Colonic mucosa (tissue), 4 donors: ENCODE measurements at regions of chr21 and their contacts with region 1.

Region 1: GRCh38 chr21:36330904-36331303 is 10.9 kb downstream of the MORC3 start:
- DNase-seq: peak; percentile 52
- H3K4me3 ChIP-seq: no peak overlapping the region
- H3K27ac ChIP-seq: no peak overlapping the region
- H3K4me1 ChIP-seq: peaks cover 3% of the 10 kb centered on the region
- H3K27me3 ChIP-seq: no peaks in the 10 kb centered on the region
- CTCF ChIP-seq: peak; percentile 55

Region 2: DNA sequence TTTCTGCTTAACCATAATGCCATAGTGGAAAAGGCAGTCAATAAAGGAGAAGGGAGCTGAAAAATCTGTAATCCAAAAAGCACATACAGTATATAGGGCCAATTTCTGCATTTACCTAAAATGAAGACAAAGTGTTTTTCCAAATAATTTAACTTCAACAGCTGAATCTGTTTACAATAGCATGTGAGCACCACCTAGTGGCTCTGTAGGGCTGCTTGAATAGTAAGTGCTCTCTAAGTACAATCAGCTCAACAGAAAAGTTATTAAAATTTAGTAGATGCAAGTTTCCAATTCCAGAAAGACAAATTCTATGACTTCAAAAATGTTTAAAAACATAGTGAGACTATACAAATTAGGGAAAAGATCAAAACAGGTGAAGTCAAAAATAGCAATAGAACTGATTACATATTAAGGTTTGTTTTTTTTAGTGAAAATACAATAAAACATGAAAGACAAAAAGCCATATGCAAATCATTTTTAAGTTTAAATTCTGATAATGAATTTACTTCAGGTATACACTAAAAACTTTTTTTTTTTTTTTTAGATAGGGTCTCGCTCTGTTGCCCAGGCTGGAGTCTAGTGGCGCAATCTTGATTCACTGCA is 490.6 kb before region 1 on chr21:
- intact Hi-C with region 1: no loop called
- DNase-seq: peak; percentile 65
- H3K4me3 ChIP-seq: no peak overlapping the region
- H3K27ac ChIP-seq: no peak overlapping the region
- H3K4me1 ChIP-seq: no peaks in the 10 kb centered on the region
- H3K27me3 ChIP-seq: no peaks in the 10 kb centered on the region
- CTCF ChIP-seq: peak; percentile 69

Region 3: GRCh38 chr21:36149788-36150711 is 180.9 kb before region 1 on chr21:
- intact Hi-C with region 1: loop called (anchors 5 kb)
- DNase-seq: no peak
- H3K4me3 ChIP-seq: no peak overlapping the region
- H3K27ac ChIP-seq: peak overlapping the region; percentile 31
- H3K4me1 ChIP-seq: peaks cover 7% of the 10 kb centered on the region
- H3K27me3 ChIP-seq: no peaks in the 10 kb centered on the region
- CTCF ChIP-seq: no peak

Region 4: DNA sequence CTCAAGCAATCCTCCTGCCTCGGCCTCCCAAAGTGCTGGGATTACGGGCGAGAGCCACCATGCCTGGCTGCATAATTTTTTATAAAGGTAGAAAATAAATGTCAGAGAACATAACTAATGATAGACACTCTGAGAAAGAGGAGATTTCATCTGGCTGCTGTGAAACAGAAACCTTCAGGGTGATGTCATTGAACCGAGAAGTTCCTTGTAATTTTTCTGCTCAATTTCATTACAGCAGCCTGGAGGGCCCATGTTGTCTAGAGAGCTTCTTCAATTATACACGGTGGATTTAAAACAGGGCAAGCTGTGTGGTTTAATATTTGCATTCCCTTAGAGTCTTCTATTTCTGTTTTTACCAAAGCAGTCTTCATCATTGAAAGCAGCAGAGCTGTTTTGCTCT is 75.2 kb before region 1 on chr21:
- intact Hi-C with region 1: no loop called
- DNase-seq: no peak
- H3K4me3 ChIP-seq: no peak overlapping the region
- H3K27ac ChIP-seq: no peak overlapping the region
- H3K4me1 ChIP-seq: no peaks in the 10 kb centered on the region
- H3K27me3 ChIP-seq: no peaks in the 10 kb centered on the region
- CTCF ChIP-seq: no peak

Region 5: GRCh38 chr21:36274128-36274527 is 56.8 kb before region 1 on chr21:
- intact Hi-C with region 1: loop called (anchors 10 kb)
- DNase-seq: no peak
- H3K4me3 ChIP-seq: no peak overlapping the region
- H3K27ac ChIP-seq: no peak overlapping the region
- H3K4me1 ChIP-seq: no peaks in the 10 kb centered on the region
- H3K27me3 ChIP-seq: no peaks in the 10 kb centered on the region
- CTCF ChIP-seq: no peak